Posterior cingulate gyrus (tissue), 11 donors: ENCODE measurements at regions of chr18 and their contacts with region 1.

Region 1: DNA sequence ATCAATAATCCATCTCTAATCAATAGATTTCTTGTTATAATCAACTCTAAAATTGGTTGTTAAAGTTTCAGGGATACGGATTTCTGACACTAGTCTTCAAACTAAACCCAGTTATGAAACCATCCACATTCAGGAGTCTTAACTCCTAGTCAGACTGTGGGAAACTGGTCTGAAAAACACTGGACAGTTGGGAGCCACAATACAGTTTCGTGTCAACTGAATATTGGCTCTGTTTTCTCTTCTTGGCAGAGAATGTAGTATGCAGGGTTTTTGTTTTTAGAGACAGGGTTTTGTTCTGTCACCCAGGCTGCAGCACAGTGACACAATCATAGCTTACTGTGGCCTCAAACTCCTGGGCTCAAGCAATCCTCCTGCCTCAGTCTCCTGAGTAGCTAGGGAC is 123.1 kb downstream of the RTTN start:
- DNase-seq: no peak

Region 2: DNA sequence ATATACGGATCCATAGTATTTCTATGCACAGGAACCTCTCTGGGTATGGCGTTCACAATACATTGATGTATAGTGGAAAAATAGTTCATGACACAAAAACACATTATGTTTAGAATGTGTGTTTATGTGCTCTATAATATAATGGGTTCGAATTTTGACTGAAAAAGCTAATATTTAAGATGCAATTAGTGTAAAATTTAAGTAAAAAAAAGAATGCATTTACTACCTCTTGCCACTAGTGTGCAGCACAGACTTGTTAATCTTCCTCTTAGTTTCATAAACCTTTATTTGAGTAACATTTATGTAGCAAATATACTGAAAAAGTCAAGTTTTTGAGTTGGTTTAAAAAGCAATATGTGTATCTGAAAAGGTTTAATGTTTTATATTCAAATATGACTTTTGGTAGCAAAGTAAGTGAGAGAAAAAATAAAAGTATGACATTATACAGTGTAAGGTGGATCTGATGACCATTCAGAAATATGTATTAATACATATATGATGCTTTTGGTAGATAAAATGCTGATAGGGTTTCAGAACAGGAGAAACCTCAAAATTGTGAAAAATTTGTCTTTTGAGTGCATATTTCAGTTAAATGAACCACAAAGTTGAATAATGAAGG is 1235.1 kb before region 1 on chr18:
- intact Hi-C with region 1: loop called (anchors 10 kb)
- DNase-seq: no peak

Region 3: DNA sequence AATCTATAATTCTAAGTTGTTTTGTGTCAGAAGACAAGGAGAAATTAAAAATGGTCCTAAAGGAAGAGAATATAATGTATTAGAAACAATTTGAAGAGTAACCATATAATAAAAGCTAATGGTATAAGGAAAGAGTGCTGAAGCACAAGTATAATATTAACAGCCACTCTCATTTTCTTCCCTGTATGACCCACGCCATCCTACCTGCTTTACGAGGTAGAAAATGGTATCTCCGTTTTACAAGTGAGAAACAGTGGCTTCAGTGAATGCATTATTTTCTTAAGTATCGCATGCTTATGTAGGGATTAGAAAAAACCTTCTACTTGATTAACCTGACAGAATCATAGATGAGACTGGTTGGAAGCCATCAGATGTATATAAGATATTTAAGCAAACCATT is 1018.4 kb before region 1 on chr18:
- intact Hi-C with region 1: no loop called
- DNase-seq: no peak

Region 4: DNA sequence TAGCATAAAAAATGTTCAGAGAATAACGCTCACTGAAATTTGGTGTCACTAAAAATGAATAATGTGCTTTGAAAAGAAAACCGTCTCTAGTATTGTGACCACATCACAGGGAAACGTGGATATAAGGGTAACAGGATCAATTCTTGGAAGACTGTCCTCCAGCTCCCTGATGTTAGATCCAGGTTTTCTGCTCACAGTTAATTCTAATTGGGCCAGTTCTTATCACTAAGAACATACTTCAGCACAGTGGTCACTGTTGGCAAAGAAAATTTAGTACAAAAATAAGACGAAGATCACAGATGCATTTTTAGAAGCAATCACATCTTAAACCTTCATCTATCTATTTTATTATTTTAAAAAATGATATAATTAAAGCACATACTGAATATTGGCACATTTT is 77.7 kb before region 1 on chr18:
- intact Hi-C with region 1: no loop called
- DNase-seq: no peak

Region 5: GRCh38 chr18:70243131-70243530 is 160.7 kb after region 1 on chr18:
- intact Hi-C with region 1: no loop called
- DNase-seq: no peak